ENCODE measurements at regions of chr7 and their contacts with region 1.

Region 1: DNA sequence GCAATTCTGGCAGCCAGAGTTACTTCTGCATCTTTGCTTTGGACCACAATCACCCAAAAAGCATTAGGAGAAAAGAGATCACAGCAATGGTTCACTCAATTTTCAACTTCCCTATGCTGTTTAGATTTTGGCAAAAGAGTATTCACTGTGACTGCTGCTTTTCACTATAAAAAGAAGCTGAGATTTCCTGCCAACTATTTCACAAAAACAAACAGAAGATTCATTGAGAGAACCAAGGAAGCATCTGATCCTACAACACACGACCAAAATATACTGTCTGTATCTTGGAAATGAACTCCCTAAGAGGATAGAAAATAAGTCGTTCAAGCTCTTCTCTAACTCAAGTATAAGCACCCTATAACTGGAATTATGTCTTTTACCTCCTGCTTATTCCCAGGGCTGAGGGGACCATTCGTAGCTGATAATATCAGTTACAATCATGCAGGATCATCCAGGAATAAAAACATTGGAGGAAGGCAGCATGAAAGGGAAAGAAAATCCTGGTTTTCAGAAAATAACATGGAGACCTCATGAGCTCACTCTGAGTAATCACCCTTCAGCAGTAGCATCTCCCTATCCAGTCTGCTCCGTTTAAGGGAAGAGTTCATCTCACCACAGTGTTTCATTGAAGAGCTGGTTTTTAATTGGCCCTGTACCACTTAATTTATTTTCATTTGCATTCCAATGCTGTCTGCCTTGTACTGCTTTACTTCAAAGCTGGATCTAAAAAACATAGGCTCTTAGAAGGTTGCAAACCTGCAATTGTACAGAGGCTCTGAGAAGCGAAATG is 256.2 kb downstream of the PAXIP1 start:
- DNase-seq: no peak
- ATAC-seq: no peak
- H3K4me3 ChIP-seq: no peak overlapping the region
- H3K27ac ChIP-seq: no peak overlapping the region
- H3K4me1 ChIP-seq: no peaks in the 10 kb centered on the region
- H3K27me3 ChIP-seq: peaks cover 0 to 11% (median 0%) of the 10 kb centered on the region in 4 donors
- CTCF ChIP-seq: no peak

Region 2: GRCh38 chr7:154532771-154533170 is 214.0 kb before region 1 on chr7:
- intact Hi-C with region 1: no loop called
- DNase-seq: no peak
- ATAC-seq: no peak
- H3K4me3 ChIP-seq: no peak overlapping the region
- H3K27ac ChIP-seq: no peak overlapping the region
- H3K4me1 ChIP-seq: no peaks in the 10 kb centered on the region
- H3K27me3 ChIP-seq: peaks cover 0 to 4% (median 0%) of the 10 kb centered on the region in 4 donors
- CTCF ChIP-seq: no peak

Region 3: GRCh38 chr7:154698726-154699291 is 48.0 kb before region 1 on chr7:
- intact Hi-C with region 1: loop called in 1 of 3 experiments (anchors 5 kb)
- DNase-seq: peak in 1 of 6 donors; percentile 42
- ATAC-seq: peak; percentile 48 to 95 (median 66)
- H3K4me3 ChIP-seq: no peak overlapping the region
- H3K27ac ChIP-seq: no peak overlapping the region
- H3K4me1 ChIP-seq: no peaks in the 10 kb centered on the region
- H3K27me3 ChIP-seq: no peaks in the 10 kb centered on the region
- CTCF ChIP-seq: peak; percentile 45 to 58 (median 48)